Psoas muscle (tissue), 8 donors: ENCODE measurements at regions of chr13 and their contacts with region 1.

Region 1: DNA sequence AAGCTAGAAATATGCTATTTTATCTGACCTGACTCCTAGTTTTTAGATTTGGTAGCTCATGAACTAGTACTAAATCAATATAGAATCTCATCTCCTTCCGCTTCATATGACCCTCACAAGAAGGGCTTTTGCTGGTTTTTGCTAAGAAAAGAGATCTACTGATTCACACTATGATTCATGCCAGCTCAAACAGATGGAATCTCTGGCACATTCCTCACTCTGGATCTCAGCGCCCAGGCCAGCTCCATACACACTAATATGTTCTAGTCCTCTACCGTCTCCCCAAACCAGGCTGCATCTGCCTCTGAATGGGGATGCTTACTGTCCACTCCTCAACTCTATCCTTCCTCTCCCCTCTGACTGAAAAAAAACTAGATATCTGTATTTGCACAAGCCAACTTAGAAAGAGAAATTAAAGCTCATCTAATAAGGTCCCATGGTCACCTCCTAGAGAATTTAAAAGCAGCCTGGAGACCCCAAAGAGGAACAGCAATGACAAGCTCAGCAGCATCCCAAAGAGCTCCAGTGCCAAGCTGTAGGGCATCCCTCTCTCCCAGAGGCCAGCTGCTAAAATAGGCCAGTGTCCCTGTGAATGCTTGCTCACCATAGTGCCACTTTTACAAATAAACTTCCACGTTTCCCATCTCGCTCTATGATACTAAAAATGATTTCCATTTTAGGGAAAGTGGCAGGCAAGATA is 74.9 kb downstream of the LHFPL6 start:
- DNase-seq: peak in 1 of 2 donors; percentile 27
- ATAC-seq: peak in 1 of 4 donors; percentile 61
- H3K4me3 ChIP-seq: no peak overlapping the region
- H3K27ac ChIP-seq: no peak overlapping the region
- H3K4me1 ChIP-seq: no peaks in the 10 kb centered on the region
- H3K27me3 ChIP-seq: no peaks in the 10 kb centered on the region
- CTCF ChIP-seq: no peak

Region 2: GRCh38 chr13:39565036-39565949 is 37.2 kb after region 1 on chr13:
- intact Hi-C with region 1: loop called in 1 of 2 experiments (anchors 5 kb)
- DNase-seq: peak in 1 of 2 donors; percentile 16
- ATAC-seq: no peak
- H3K4me3 ChIP-seq: no peak overlapping the region
- H3K27ac ChIP-seq: no peak overlapping the region
- H3K4me1 ChIP-seq: no peaks in the 10 kb centered on the region
- H3K27me3 ChIP-seq: no peaks in the 10 kb centered on the region
- CTCF ChIP-seq: no peak